ENCODE measurements at regions of chr9 and their contacts with region 1.

Region 1: GRCh38 chr9:20622330-20623020 is at the start of gene MLLT3:
- DNase-seq: peak; percentile 73
- H3K4me3 ChIP-seq: peak within 1 kb of the TSS; percentile 77
- H3K27me3 ChIP-seq: no peaks in the 10 kb centered on the region
- CTCF ChIP-seq: no peak
- polyA plus RNA-seq, gene MLLT3: 13.8 and 32.1 TPM in 2 replicates

Region 2: GRCh38 chr9:20307621-20308020 is 314.9 kb before region 1 on chr9:
- CTCF ChIA-PET with region 1: no interaction called
- POLR2A ChIA-PET with region 1: interaction called, 11 read pairs
- DNase-seq: no peak
- H3K4me3 ChIP-seq: no peak overlapping the region
- H3K27me3 ChIP-seq: peaks cover 3% of the 10 kb centered on the region; the same call in 1 of the 2 replicates
- CTCF ChIP-seq: no peak

Region 3: DNA sequence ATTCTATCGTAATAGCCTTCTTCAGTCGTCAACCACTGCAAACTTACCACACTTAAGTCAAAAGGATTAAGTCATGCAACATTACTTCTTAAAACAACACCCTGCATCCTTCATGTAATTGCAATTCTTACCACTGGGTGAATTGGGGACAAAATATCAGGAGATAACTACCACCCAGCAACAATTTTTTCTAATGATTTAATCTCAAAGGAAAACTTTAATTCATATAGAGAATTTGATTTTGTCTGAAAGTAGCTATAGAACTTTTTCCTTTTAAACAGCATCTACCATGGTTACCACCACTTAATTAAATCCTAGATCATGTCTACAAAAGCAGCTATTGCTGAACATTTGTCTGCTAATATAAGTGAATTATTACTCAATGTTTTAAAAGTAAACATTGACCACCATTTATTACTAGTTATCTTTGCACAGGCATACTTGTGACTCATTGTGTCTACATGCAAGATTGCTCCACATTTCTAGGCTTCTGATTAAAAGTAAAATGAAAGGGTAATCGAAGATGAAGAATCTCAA is 10.7 kb before region 1 on chr9:
- CTCF ChIA-PET with region 1: interaction called, 6 read pairs
- POLR2A ChIA-PET with region 1: interaction called, 11 read pairs
- DNase-seq: peak; percentile 65
- H3K4me3 ChIP-seq: no peak overlapping the region
- H3K27me3 ChIP-seq: no peaks in the 10 kb centered on the region
- CTCF ChIP-seq: peak; percentile 61

Region 4: DNA sequence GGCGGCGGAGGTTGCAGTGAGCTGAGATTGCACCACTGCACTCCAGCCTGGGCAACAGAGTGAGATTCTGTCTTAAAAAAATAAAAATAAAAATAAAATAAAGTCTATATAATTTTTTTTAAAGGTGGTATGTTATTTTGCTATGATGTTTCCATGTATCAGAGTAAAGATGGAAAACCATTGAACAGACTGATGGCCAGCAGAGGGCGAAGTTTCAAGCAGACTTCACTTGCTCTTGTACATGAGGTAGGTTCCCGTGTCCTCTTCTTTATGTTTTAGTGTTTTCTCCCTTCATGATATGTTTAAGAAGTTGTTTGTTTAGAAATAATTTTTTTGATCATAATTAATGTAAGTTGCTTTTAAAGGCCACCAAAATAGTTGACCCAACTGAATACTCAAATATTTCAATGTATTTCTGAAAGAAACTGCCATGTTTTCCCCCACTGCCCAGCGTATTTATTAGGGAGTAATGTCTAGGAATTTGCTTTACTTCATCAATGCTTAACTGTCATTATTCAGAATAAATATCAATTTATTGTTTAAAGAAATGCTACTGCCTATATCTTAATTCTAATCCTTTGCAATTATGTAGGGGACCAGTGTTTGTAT is 262.6 kb after region 1 on chr9:
- CTCF ChIA-PET with region 1: interaction called, 12 read pairs
- POLR2A ChIA-PET with region 1: no interaction called
- DNase-seq: no peak
- H3K4me3 ChIP-seq: no peak overlapping the region
- H3K27me3 ChIP-seq: no peaks in the 10 kb centered on the region
- CTCF ChIP-seq: peak; percentile 68

Region 5: DNA sequence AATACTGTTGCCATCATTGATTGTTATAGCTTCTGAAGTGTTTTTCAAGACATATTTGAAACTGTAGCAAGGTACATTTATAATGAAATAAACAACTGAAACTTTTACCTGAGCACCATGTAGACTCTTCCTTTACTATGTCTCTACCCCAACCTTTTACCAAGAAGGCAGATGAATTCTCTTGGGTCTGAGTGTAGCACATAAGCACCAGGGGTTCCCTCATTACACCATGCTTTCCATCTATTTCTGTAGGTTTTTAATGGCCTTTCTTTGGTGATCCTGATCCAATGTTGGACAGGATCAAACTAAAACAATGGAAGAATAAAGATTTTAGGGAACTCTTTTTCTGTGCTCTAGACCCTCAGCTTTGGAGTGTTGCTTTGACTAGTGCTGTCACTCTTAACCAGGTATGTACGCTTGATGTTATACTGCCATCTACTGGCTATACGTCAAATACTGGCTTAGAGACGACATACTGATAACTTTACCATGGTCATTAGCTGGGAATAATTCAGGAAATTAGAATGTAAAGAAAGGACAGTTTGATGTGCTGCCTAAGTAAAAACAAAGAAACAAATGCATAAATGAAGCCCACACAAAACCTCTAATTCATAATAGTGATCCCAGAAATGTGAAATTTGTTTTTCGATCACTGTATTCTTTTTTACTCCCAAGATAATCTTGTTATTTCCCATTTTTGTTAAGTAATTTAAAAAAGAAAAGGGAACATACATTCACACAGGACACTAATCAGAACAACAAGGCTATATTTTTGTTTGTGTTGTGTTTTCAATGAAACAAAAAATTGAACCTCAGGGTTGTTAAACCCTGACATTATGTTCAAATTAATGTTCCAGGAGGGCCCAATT is 488.5 kb after region 1 on chr9:
- CTCF ChIA-PET with region 1: interaction called, 27 read pairs
- POLR2A ChIA-PET with region 1: no interaction called
- DNase-seq: no peak
- H3K4me3 ChIP-seq: no peak overlapping the region
- H3K27me3 ChIP-seq: no peaks in the 10 kb centered on the region
- CTCF ChIP-seq: peak; percentile 74